ENCODE measurements at regions of chr2 and their contacts with region 1.

Region 1: GRCh38 chr2:134446383-134447017 is 192.6 kb downstream of the MGAT5 start:
- DNase-seq: no peak
- H3K4me3 ChIP-seq: no peak overlapping the region
- H3K27ac ChIP-seq: no peak overlapping the region
- H3K4me1 ChIP-seq: no peaks in the 10 kb centered on the region; a peak in 1 of 7 replicates
- H3K27me3 ChIP-seq: no peaks in the 10 kb centered on the region
- CTCF ChIP-seq: no peak
- EP300 ChIP-seq: no peak
- POLR2A ChIP-seq: no peak
- RAD21 ChIP-seq: no peak

Region 2: GRCh38 chr2:134431838-134432434 is 14.6 kb before region 1 on chr2:
- CTCF ChIA-PET with region 1: interaction called, 132 read pairs
- POLR2A ChIA-PET with region 1: interaction called, 4 read pairs
- DNase-seq: no peak
- H3K4me3 ChIP-seq: no peak overlapping the region
- H3K27ac ChIP-seq: no peak overlapping the region
- H3K4me1 ChIP-seq: peaks cover 0 to 8% (median 5%) of the 10 kb centered on the region in 4 experiments; a peak in 4 of 7 replicates
- H3K27me3 ChIP-seq: peaks cover 3 to 40% (median 22%) of the 10 kb centered on the region in 4 experiments; a peak in 6 of 7 replicates
- CTCF ChIP-seq: no peak
- EP300 ChIP-seq: no peak
- POLR2A ChIP-seq: no peak
- RAD21 ChIP-seq: no peak

Region 3: GRCh38 chr2:134460583-134460998 is 14.1 kb after region 1 on chr2:
- CTCF ChIA-PET with region 1: interaction called, 55 read pairs
- POLR2A ChIA-PET with region 1: no interaction called
- DNase-seq: peak; percentile 69 to 80
- H3K4me3 ChIP-seq: no peak overlapping the region
- H3K27ac ChIP-seq: no peak overlapping the region
- H3K4me1 ChIP-seq: peaks cover 0 to 4% (median 0%) of the 10 kb centered on the region in 4 experiments; a peak in 3 of 7 replicates
- H3K27me3 ChIP-seq: no peaks in the 10 kb centered on the region
- CTCF ChIP-seq: peak in 2 of 3 experiments; percentile 91 to 95; a peak in 3 of 4 replicates
- EP300 ChIP-seq: no peak
- POLR2A ChIP-seq: no peak
- RAD21 ChIP-seq: peak; percentile 97 to 99

Measured in H1 (cell line).